ENCODE measurements at regions of chr3 and their contacts with region 1.

Region 1: DNA sequence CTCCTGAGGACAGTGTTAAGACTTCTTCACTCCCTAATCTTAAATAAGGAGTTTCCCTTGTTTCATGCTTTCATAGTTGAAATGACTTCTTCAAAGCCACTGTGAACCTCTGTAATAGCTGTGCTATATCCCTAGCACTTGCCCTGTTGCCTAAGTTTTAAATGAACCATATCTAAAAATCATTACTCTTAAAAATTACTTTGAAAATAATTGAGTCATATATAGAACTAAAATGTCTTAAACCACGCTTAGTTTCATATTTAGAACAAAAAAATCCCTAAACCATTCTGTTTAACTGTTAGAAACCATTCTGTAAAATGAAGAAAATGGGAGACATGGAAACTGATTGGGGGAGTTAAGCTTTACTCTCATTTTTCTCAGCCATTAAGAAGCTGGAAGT is 29.8 kb downstream of the DNAJC19 start:
- DNase-seq: no peak
- H3K4me3 ChIP-seq: no peak overlapping the region
- H3K27ac ChIP-seq: no peak overlapping the region
- H3K4me1 ChIP-seq: no peaks in the 10 kb centered on the region
- H3K27me3 ChIP-seq: no peaks in the 10 kb centered on the region
- CTCF ChIP-seq: no peak

Region 2: DNA sequence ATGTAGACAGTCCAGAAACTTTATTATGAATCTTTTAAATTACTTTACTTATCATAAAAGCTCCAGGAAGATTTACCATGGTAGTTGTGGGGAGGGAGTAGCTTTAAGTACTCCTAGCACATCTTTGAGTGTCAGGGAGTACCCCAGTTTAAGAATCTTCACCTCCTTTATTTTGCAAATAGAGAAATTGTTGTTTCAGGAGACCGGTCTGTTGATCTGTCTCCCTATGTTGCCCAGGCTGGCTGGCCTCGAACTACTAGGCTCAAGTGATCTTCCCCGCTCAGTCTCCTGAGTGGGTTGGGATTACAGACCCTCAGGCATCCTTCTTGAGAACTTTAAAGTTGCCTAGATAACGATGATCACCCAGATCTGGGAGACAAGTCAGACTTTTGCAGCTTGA is 36.1 kb before region 1 on chr3:
- CTCF ChIA-PET with region 1: no interaction called
- POLR2A ChIA-PET with region 1: no interaction called
- intact Hi-C with region 1: loop called (anchors 5 kb)
- DNase-seq: no peak
- H3K4me3 ChIP-seq: no peak overlapping the region
- H3K27ac ChIP-seq: no peak overlapping the region
- H3K4me1 ChIP-seq: peaks cover 3% of the 10 kb centered on the region
- H3K27me3 ChIP-seq: no peaks in the 10 kb centered on the region
- CTCF ChIP-seq: no peak

Region 3: DNA sequence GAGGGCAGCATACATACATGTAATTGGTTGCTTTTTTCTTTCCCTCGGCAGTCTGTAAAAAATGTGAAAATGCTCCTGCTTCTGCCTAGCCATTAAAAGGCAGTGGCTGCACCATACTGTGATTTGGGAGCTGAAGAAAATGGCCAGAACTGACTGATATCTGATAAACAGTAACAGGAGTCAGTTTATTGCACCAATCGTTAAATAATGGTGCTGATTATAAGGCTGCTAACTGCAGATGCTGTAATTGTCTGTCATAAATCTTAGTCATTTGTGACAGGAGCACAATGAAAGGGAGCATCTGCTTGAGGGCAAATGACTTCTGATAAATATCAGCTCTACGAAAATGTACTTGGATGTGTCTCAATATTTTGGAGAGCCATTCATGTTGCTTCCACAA is 292.9 kb after region 1 on chr3:
- CTCF ChIA-PET with region 1: no interaction called
- POLR2A ChIA-PET with region 1: no interaction called
- intact Hi-C with region 1: no loop called
- DNase-seq: peak; percentile 46
- H3K4me3 ChIP-seq: no peak overlapping the region
- H3K27ac ChIP-seq: no peak overlapping the region
- H3K4me1 ChIP-seq: no peaks in the 10 kb centered on the region
- H3K27me3 ChIP-seq: peaks cover 26% of the 10 kb centered on the region
- CTCF ChIP-seq: no peak

Measured in A673 (cell line).